ENCODE measurements at regions of chr6 and their contacts with region 1.

Region 1: DNA sequence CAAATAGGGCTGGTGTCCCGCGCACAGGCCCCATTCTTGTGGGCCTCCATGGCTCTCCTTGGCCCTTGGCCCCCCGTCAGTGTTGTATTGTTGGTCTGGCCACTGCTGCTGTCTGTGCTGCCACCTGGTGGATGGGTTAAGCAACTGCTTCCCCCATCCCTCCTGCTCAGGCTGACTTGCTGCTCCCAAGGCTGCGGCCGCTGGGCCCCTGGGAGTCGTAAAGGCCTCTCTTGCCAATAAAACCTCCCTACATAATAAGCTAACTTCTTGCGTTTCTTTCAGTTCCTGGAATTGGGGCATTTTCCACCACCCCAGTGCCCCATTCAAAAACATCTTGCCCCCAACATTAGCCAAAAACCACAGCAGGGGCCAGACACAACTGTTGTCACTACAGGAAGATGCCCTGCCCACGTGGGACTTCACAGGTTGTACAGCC is 27.1 kb downstream of the CD83 start:
- DNase-seq: no peak
- H3K4me3 ChIP-seq: no peak overlapping the region
- H3K27ac ChIP-seq: no peak overlapping the region
- H3K4me1 ChIP-seq: peaks cover 9% of the 10 kb centered on the region
- H3K27me3 ChIP-seq: no peaks in the 10 kb centered on the region
- CTCF ChIP-seq: peak; percentile 89 to 90 (median 89)
- POLR2A ChIP-seq: no peak

Region 2: DNA sequence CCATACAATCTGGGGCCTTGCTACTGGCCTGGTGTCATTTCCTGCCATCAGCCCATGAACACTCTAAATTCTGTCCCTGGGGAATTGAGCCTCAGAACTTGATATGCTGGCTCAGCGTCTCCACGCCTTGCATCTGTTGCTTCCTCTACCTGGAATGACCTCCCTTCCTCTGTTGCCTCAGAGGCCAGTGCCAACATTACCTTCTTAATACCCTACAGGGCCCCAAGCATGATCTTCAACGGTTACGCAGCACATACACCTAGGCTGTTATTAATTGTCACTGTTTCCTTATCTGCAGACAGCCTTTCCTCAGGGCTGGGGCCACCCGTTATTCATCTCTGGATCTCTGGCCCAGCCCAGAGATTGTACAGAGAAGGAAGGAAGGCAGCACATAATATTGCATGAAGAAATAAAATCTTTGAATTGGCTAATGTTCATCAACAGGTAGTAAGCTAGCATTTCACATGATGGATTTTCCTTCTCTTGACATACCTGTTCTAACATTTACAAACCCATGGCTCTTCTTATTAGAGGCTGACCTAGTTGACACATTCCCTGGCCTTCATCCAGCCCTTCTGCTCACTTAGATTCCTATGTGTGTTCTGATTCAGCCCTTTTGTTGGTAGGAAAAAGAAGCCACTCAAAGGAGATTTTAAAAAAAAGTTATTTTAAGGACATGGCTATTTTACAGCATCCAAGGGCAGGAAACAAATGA is 228.3 kb before region 1 on chr6:
- intact Hi-C with region 1: loop called (anchors 10 kb)
- DNase-seq: no peak
- H3K4me3 ChIP-seq: no peak overlapping the region
- H3K27ac ChIP-seq: no peak overlapping the region
- H3K4me1 ChIP-seq: no peaks in the 10 kb centered on the region
- H3K27me3 ChIP-seq: no peaks in the 10 kb centered on the region
- CTCF ChIP-seq: no peak
- POLR2A ChIP-seq: no peak

Region 3: GRCh38 chr6:13992417-13993055 is 152.2 kb before region 1 on chr6:
- intact Hi-C with region 1: no loop called
- DNase-seq: no peak
- H3K4me3 ChIP-seq: no peak overlapping the region
- H3K27ac ChIP-seq: no peak overlapping the region
- H3K4me1 ChIP-seq: peaks cover 7% of the 10 kb centered on the region
- H3K27me3 ChIP-seq: no peaks in the 10 kb centered on the region
- CTCF ChIP-seq: no peak
- POLR2A ChIP-seq: no peak

Measured in vagina (tissue), 2 donors.